Posterior vena cava (tissue), 2 donors: ENCODE measurements at regions of chr16 and their contacts with region 1.

Region 1: GRCh38 chr16:10509534-10510025 is 70.8 kb downstream of the EMP2 start:
- DNase-seq: no peak

Region 2: DNA sequence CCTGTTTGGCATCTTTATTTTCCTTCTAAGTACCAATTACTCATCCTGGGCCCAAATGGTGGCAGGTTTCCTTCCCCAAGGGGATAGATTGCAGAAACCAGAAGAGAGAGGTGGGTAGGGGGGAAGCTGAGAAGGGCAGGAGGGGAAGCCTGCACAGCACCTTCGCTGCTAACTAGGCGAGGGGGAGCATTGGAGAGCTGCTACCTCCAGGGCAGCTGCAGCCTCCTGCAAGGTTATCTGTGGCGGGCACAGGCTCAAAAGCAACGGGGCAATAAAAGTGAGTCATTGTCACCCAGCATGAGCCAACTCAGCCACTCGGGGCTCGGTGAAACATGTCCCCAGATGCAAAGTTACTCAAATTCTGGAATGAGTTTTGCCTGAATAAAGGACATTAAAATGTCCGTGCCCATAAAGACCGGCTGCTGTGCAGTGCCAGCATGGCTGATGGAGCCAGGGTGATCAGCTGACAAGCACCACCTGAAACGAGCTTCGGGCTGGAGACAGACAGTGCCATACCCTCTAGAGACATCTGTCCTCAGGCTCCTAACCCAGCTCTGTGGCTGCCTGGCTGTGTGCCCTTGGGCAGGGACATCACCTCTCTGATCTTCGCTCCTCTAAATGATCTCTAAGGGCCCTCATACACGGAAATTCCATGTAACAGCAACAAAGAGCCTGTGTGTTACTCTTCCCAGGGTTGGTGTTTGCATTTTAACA is 259.3 kb before region 1 on chr16:
- intact Hi-C with region 1: loop called in 1 of 2 experiments (anchors 5 kb)
- DNase-seq: no peak

Region 3: GRCh38 chr16:10314811-10315210 is 194.8 kb before region 1 on chr16:
- intact Hi-C with region 1: loop called in 1 of 2 experiments (anchors 10 kb)
- DNase-seq: no peak

Region 4: GRCh38 chr16:10419712-10420111 is 89.9 kb before region 1 on chr16:
- intact Hi-C with region 1: no loop called
- DNase-seq: no peak